ENCODE measurements at regions of chr3 and their contacts with region 1.

Region 1: DNA sequence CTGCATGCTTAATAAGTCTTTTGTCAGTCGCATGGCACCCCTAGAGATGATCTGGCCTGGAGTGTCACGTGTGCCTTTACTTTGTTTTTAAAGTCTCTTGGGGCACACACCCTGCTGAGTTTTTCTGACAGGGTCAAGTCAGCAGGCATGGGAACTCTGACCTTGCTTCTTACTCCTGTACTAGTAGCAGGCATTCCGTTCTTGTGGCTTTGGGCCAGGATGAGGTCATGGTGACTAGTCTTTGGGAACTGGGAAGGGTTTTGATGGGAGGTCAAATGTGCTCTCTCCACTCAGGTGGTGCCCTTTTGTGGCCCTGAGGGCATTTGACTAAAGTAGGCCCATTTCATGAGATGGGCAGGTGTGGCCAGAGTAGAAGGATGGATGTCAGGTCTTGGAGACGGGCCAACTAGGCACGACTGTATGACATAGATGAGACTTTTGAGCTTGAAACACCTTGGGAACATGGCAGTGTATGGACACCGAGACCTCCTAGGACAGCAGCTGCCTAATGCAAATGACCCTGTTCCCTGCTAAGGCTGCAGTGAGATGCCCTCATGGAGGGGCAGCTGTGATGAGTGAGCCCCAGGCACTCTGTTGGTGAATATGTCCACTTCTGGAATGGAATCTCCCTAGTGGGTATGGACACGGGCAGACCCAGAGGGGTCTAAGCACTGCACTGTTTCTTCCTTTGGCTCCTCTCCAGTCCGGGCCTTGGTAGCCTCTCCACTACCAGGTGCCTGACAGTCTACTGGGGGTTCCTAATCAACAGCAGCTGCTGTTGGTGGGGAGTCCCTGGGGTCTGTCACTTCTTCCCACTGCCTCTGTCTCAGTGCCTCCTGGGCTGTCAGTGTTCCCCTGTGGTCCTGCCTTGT is 16.4 kb downstream of the SRPRB start:
- DNase-seq: peak in 1 of 2 donors; percentile 89
- H3K4me3 ChIP-seq: no peak overlapping the region
- H3K27ac ChIP-seq: no peak overlapping the region
- H3K4me1 ChIP-seq: no peaks in the 10 kb centered on the region
- H3K27me3 ChIP-seq: no peaks in the 10 kb centered on the region
- CTCF ChIP-seq: peak in 1 of 3 experiments; percentile 10

Region 2: DNA sequence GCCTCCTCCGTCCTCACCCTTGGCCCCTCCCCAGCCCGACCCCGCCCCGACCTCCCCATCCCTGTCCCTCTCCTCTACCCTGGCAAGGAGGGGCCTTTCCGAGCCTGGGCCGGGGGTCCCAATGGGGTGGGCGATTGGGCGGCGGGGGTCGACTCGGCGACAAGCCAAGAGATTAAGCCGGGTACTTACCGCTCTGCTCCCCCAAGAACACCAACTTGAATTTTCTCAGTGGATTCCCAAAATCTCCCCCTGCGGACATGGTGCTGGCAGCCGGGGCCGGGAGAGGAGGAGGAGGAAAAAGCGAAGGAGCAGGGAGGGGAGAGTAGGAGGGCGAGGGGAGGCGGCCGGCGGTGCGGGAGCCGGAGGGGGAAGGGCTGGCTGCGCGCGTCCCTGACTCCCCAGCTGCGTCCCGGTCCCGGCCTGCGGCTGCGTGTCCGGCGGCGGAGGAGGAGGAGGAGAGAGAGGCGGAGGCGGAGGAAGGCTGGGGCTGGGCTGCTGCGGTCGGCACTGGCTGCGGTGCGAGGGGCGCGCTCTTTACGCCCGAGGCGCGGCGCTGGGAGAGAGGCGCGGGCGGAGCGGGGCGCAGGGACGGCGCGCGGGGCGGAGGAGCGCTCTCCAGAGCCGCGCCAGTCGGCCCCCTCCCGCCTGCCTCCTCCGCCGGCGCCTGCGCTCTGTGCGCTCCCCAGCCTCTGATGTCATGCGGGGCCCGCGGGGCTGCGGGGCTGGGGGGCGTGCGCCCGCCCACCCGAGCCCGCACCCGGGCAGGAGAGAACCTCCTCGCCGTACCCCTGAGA is 73.4 kb after region 1 on chr3 and contains the start of gene RAB6B:
- intact Hi-C with region 1: no loop called
- DNase-seq: no peak
- H3K4me3 ChIP-seq: peak within 1 kb of the TSS; percentile 64 to 71
- H3K27ac ChIP-seq: no peak within 1 kb of the TSS
- H3K4me1 ChIP-seq: peaks cover 0 to 6% of the 10 kb centered on the region in 2 donors
- H3K27me3 ChIP-seq: no peaks in the 10 kb centered on the region
- CTCF ChIP-seq: no peak
- total RNA-seq, gene RAB6B: 0.75 TPM

Region 3: DNA sequence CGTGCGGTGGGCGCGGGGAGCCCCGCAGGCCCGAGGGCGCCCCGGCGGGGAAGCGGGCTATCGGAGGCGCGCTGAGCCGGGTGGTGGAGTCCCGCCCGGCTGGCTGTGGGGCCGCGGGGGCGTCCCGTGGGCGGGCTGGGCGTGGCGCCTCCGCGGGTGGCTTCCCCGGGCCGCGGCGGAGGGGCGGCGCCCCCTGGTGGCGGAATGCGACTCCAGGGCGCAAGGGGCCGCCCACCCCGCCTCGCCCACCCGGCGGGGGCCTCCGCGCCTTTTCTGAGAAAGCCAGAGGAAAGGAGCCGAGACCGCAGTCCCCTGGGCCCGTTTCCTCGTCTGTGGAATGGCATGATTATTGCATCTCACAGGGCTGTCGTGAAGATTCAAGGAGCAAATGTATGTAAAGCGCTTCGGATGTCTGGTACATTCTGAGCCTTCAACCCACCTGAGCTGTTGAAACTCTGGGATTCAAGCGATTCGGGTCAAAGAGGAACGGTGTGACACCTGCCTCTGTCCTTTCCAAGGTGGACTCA is 105.6 kb after region 1 on chr3:
- intact Hi-C with region 1: loop called (anchors 1 kb)
- DNase-seq: peak in 1 of 2 donors; percentile 72
- H3K4me3 ChIP-seq: peak overlapping the region; percentile 55 to 80
- H3K27ac ChIP-seq: no peak overlapping the region
- H3K4me1 ChIP-seq: peaks cover 0 to 4% of the 10 kb centered on the region in 2 donors
- H3K27me3 ChIP-seq: no peaks in the 10 kb centered on the region
- CTCF ChIP-seq: peak; percentile 55 to 76 (median 60)

Measured in ascending aorta (tissue), 2 donors.